Endothelial cell of umbilical vein (primary cell): ENCODE measurements at regions of chr5 and their contacts with region 1.

Region 1: DNA sequence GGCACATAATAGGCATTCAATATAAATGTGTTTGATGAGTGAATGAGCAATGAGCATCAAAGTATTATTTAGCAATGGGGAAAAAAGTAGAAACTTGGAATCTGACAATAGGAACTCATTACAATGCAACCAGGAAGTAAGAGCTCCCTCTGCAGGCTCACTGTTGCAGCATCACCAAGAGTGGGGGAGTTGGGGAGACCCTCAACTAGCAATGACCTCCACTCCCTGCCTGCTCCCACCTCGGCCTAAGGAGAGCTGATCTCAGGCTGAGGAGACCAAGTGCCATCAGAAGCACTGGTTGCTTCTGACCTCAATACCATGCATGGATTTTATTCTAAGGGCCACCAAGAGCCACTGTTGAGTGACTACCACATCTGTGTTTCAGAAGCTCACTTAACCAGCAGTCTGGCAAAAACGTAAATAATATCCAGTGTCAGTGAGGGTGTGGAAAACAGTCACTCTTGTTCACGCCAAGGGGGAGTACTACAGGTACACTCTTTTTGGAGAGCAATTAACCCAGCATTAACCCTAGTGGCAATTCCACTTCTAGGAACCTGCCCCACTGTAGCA is 8.0 kb downstream of the VDAC1 start:
- DNase-seq: no peak
- H3K4me3 ChIP-seq: no peak overlapping the region
- H3K27ac ChIP-seq: no peak overlapping the region
- H3K4me1 ChIP-seq: peaks cover 20% of the 10 kb centered on the region
- H3K27me3 ChIP-seq: no peaks in the 10 kb centered on the region
- CTCF ChIP-seq: peak; percentile 53 to 57
- POLR2A ChIP-seq: no peak

Region 2: GRCh38 chr5:133977161-133977787 is 19.5 kb before region 1 on chr5:
- CTCF ChIA-PET with region 1: interaction called, 15 read pairs
- POLR2A ChIA-PET with region 1: no interaction called
- dilution Hi-C with region 1: no loop called
- intact Hi-C with region 1: no loop called
- DNase-seq: no peak
- H3K4me3 ChIP-seq: no peak overlapping the region
- H3K27ac ChIP-seq: peak overlapping the region; percentile 41
- H3K4me1 ChIP-seq: no peaks in the 10 kb centered on the region
- H3K27me3 ChIP-seq: no peaks in the 10 kb centered on the region
- CTCF ChIP-seq: no peak
- POLR2A ChIP-seq: no peak